ENCODE measurements at regions of chr15 and their contacts with region 1.

Region 1: GRCh38 chr15:95557226-95558046 is 773.1 kb upstream of the NR2F2 start:
- DNase-seq: peak; percentile 12
- ATAC-seq: peak; percentile 72
- H3K4me3 ChIP-seq: no peak overlapping the region
- H3K27ac ChIP-seq: no peak overlapping the region
- H3K4me1 ChIP-seq: no peaks in the 10 kb centered on the region
- H3K27me3 ChIP-seq: no peaks in the 10 kb centered on the region
- CTCF ChIP-seq: no peak
- EP300 ChIP-seq: peak; percentile 50 to 63; a peak in 3 of 4 replicates
- POLR2A ChIP-seq: no peak
- RAD21 ChIP-seq: no peak

Region 2: DNA sequence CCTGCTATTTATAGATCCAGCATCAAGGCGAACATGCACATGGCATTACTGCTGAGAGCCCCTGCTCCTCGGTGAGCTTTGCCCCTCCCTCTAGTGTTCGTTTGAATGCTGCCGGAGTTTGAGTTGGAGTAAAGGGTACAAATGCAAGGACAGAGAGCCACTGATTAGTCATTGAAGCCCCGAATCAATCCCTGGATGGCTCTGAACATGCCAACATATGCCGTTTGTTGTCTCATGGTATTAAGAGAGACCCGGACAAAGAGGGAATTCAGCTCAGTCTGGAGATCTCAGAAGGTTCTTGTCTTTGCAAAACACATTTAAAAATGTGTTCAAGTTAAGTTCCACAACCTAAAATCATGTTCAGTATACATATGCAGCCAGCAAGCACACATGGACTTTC is 16.1 kb before region 1 on chr15:
- CTCF ChIA-PET with region 1: interaction called, 10 read pairs
- POLR2A ChIA-PET with region 1: no interaction called
- RAD21 ChIA-PET with region 1: interaction called, 4 read pairs
- SMC1A ChIA-PET with region 1: interaction called, 5 read pairs
- in situ Hi-C with region 1: no loop called
- intact Hi-C with region 1: no loop called
- DNase-seq: no peak
- ATAC-seq: no peak
- H3K4me3 ChIP-seq: no peak overlapping the region
- H3K27ac ChIP-seq: no peak overlapping the region
- H3K4me1 ChIP-seq: no peaks in the 10 kb centered on the region
- H3K27me3 ChIP-seq: no peaks in the 10 kb centered on the region
- CTCF ChIP-seq: no peak
- EP300 ChIP-seq: no peak
- POLR2A ChIP-seq: no peak
- RAD21 ChIP-seq: no peak

Region 3: DNA sequence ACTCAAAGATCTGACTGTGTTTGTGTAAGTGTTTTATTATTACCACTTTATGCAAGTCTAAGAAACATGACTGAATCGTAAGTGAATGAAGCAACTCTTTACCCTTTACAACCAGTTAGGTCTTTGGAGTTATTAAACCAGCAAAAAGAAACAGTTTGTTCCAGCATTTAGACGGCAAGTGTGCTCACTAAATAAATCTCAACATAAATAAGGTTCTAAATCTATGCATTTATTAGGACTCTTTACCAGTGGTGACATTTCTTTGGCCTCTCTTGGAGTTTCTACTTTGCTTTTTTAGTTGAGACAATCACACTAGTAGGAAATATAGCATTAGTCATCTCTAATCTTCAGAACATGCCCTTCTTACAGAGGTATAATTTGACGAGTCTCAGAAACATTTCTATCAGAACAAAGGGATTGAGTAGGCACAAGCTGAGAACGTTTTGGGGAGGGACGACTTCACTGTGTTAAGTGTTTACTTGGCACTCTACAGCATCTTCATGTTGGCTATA is 33.2 kb after region 1 on chr15:
- CTCF ChIA-PET with region 1: no interaction called
- POLR2A ChIA-PET with region 1: no interaction called
- RAD21 ChIA-PET with region 1: no interaction called
- SMC1A ChIA-PET with region 1: interaction called, 15 read pairs
- in situ Hi-C with region 1: no loop called
- intact Hi-C with region 1: no loop called
- DNase-seq: no peak
- ATAC-seq: peak; percentile 55
- H3K4me3 ChIP-seq: no peak overlapping the region
- H3K27ac ChIP-seq: no peak overlapping the region
- H3K4me1 ChIP-seq: no peaks in the 10 kb centered on the region
- H3K27me3 ChIP-seq: no peaks in the 10 kb centered on the region
- CTCF ChIP-seq: no peak
- EP300 ChIP-seq: no peak
- POLR2A ChIP-seq: no peak
- RAD21 ChIP-seq: no peak

Region 4: GRCh38 chr15:95845862-95846515 is 288.6 kb after region 1 on chr15:
- CTCF ChIA-PET with region 1: no interaction called
- POLR2A ChIA-PET with region 1: no interaction called
- RAD21 ChIA-PET with region 1: no interaction called
- SMC1A ChIA-PET with region 1: no interaction called
- in situ Hi-C with region 1: no loop called
- intact Hi-C with region 1: no loop called
- DNase-seq: no peak
- ATAC-seq: peak; percentile 58
- H3K4me3 ChIP-seq: no peak overlapping the region
- H3K27ac ChIP-seq: peak overlapping the region; percentile 51
- H3K4me1 ChIP-seq: peaks cover 7% of the 10 kb centered on the region; the same call in 1 of the 2 replicates
- H3K27me3 ChIP-seq: no peaks in the 10 kb centered on the region
- CTCF ChIP-seq: no peak
- EP300 ChIP-seq: no peak
- POLR2A ChIP-seq: no peak
- RAD21 ChIP-seq: no peak

Measured in GM12878 (cell line).